Naive thymus-derived CD4-positive, alpha-beta T cell (primary cell): ENCODE measurements at regions of chr11 and their contacts with region 1.

Region 1: DNA sequence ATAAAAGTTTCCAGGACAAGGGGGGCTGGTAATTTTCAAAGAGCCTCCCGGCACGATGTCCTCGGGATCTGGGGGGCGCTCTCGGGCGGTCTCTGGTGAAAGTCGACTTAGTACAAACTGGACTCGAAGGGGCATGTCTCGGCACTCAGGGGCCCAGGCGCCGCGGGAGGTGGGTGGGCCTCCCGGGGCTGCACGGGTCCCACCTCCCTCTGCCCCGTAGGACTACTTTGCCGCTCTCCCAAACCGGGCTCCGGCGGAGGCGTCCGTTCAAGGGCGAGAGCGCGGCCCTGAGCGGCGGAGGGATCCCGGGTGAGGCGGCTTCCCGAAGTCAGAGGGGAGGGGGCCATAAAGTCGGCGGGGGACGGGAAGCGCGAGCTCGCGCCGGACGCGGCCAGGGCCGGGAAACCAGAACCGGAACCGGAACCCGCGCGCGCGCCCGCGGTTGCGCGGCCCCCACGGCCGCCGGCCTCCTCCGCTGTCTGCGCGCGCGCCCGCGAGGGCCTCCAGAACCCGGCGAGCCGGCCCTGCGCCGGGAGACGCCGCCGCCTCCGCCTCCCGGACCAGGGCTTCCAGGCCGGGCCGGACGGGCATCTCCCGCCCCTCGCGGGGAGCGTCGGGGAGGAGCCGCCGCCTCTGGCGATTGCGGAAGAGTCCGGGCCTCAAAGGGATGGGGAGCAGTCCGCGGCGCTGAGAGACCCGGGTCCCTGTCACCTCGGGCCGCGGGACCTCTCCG is at the start of gene ARHGEF12:
- DNase-seq: peak; percentile 16 to 86 (median 47)
- ATAC-seq: peak; percentile 72
- H3K4me3 ChIP-seq: peak within 1 kb of the TSS; percentile 65
- H3K4me3 Mint-ChIP-seq: peak within 1 kb of the TSS; percentile 75 to 95 (median 87)
- H3K27ac ChIP-seq: no peak within 1 kb of the TSS
- H3K27ac Mint-ChIP-seq: peak within 1 kb of the TSS in 6 of 9 donors; percentile 8 to 82 (median 65)
- H3K4me1 ChIP-seq: peaks cover 13 to 22% of the 10 kb centered on the region in 2 donors
- H3K4me1 Mint-ChIP-seq: peaks cover 20 to 36% (median 31%) of the 10 kb centered on the region in 7 donors
- H3K27me3 ChIP-seq: peaks cover 0 to 26% of the 10 kb centered on the region in 2 donors
- H3K27me3 Mint-ChIP-seq: peaks cover 58 to 68% (median 63%) of the 10 kb centered on the region in 5 donors
- total RNA-seq, gene ARHGEF12: 1.9 to 13.1 (median 3.5) TPM

Region 2: DNA sequence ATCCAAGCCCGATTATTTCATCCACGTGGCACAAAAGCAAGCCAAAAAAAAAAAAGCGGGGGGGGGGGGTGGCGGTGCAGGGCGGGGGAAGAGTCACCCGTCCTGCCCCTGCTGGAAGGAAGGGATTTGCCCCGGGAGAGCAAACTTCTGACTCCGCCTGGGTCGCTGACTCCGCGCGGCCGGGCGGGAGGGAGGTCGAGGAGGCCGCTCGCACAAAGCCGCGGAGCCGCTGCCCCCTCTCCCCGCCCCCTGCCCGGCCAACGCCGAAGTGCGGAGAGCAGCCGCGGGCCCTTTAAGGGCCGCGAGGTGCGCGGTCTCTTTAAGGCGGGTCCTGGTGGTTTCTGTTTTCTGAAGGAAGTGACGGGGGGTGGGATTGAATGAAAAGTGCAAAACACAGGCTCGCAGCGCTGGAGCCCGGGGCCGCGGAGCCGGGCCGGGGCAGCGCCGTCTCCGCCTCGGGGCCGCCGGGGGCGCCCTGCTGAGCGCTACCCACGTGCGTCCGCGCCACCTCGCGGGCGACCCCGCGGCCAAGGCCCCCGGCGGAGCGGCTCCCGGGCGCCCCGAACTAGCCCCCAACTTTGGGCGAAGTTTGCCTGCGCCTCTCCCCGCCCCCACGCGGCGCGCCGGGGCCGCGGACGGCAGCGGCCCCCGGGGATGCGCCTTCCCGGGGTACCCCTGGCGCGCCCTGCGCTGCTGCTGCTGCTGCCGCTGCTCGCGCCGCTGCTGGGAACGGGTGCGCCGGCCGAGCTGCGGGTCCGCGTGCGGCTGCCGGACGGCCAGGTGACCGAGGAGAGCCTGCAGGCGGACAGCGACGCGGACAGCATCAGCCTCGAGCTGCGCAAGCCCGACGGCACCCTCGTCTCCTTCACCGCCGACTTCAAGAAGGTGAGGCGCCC is 125.2 kb before region 1 on chr11 and contains the start of gene OAF:
- CTCF ChIA-PET with region 1: no interaction called
- POLR2A ChIA-PET with region 1: no interaction called
- intact Hi-C with region 1: loop called in 1 of 2 experiments (anchors 5 kb)
- DNase-seq: peak; percentile 49 to 77 (median 69)
- ATAC-seq: peak; percentile 85
- H3K4me3 ChIP-seq: peak within 1 kb of the TSS; percentile 80
- H3K4me3 Mint-ChIP-seq: peak within 1 kb of the TSS; percentile 93 to 99 (median 96)
- H3K27ac ChIP-seq: peak within 1 kb of the TSS; percentile 46
- H3K27ac Mint-ChIP-seq: peak within 1 kb of the TSS; percentile 83 to 96 (median 86)
- H3K4me1 ChIP-seq: peaks cover 0 to 8% of the 10 kb centered on the region in 2 donors
- H3K4me1 Mint-ChIP-seq: peaks cover 11 to 27% (median 18%) of the 10 kb centered on the region in 7 donors
- H3K27me3 ChIP-seq: no peaks in the 10 kb centered on the region
- H3K27me3 Mint-ChIP-seq: peaks cover 0 to 70% (median 13%) of the 10 kb centered on the region in 5 donors
- total RNA-seq, gene OAF: 3.4 to 21.2 (median 4.6) TPM

Region 3: DNA sequence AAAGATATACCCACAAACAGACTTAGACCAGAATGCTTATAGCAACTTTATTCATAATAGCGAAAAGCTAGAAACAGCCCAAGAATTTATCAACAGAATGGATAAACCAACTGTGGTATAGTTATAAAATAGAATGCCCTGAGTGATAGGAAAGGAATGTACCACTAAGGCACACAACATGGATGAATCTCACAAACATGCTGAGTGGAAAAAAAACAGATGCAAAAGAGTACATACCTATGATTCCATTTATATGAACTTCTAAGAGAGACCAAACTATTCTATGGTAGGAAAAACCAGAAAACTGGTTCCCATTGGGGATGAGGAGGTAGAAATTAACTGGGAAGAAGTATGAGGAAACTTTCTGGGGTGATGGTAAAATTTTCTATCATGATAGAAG is 135.1 kb after region 1 on chr11:
- CTCF ChIA-PET with region 1: no interaction called
- POLR2A ChIA-PET with region 1: no interaction called
- intact Hi-C with region 1: loop called in 1 of 2 experiments (anchors 10 kb)
- DNase-seq: no peak
- ATAC-seq: no peak
- H3K4me3 ChIP-seq: no peak overlapping the region
- H3K4me3 Mint-ChIP-seq: no peak overlapping the region
- H3K27ac ChIP-seq: no peak overlapping the region
- H3K27ac Mint-ChIP-seq: no peak overlapping the region
- H3K4me1 ChIP-seq: no peaks in the 10 kb centered on the region
- H3K4me1 Mint-ChIP-seq: no peaks in the 10 kb centered on the region
- H3K27me3 ChIP-seq: no peaks in the 10 kb centered on the region
- H3K27me3 Mint-ChIP-seq: no peaks in the 10 kb centered on the region

Region 4: GRCh38 chr11:120682866-120683265 is 346.8 kb after region 1 on chr11:
- CTCF ChIA-PET with region 1: interaction called, 23 read pairs
- POLR2A ChIA-PET with region 1: no interaction called
- intact Hi-C with region 1: loop called in 1 of 2 experiments (anchors 1 kb)
- DNase-seq: no peak
- ATAC-seq: no peak
- H3K4me3 ChIP-seq: no peak overlapping the region
- H3K4me3 Mint-ChIP-seq: no peak overlapping the region
- H3K27ac ChIP-seq: no peak overlapping the region
- H3K27ac Mint-ChIP-seq: no peak overlapping the region
- H3K4me1 ChIP-seq: no peaks in the 10 kb centered on the region
- H3K4me1 Mint-ChIP-seq: peaks cover 0 to 1% (median 0%) of the 10 kb centered on the region in 7 donors
- H3K27me3 ChIP-seq: no peaks in the 10 kb centered on the region
- H3K27me3 Mint-ChIP-seq: peaks cover 7 to 49% (median 30%) of the 10 kb centered on the region in 5 donors

Region 5: GRCh38 chr11:121194731-121195596 is 858.9 kb after region 1 on chr11:
- CTCF ChIA-PET with region 1: no interaction called
- POLR2A ChIA-PET with region 1: no interaction called
- intact Hi-C with region 1: loop called in 1 of 2 experiments (anchors 1 kb)
- DNase-seq: peak; percentile 13 to 67 (median 50)
- ATAC-seq: peak; percentile 85
- H3K4me3 ChIP-seq: no peak overlapping the region
- H3K4me3 Mint-ChIP-seq: no peak overlapping the region
- H3K27ac ChIP-seq: no peak overlapping the region
- H3K27ac Mint-ChIP-seq: no peak overlapping the region
- H3K4me1 ChIP-seq: no peaks in the 10 kb centered on the region
- H3K4me1 Mint-ChIP-seq: peaks cover 0 to 8% (median 0%) of the 10 kb centered on the region in 7 donors
- H3K27me3 ChIP-seq: peaks cover 0 to 5% of the 10 kb centered on the region in 2 donors
- H3K27me3 Mint-ChIP-seq: peaks cover 21 to 35% (median 25%) of the 10 kb centered on the region in 5 donors